GM12878 (cell line): ENCODE measurements at regions of chr2 and their contacts with region 1.

Region 1: GRCh38 chr2:189848276-189848675 is 64.0 kb downstream of the PMS1 start:
- DNase-seq: no peak
- ATAC-seq: no peak
- H3K4me3 ChIP-seq: no peak overlapping the region
- H3K27ac ChIP-seq: no peak overlapping the region
- H3K4me1 ChIP-seq: no peaks in the 10 kb centered on the region
- H3K27me3 ChIP-seq: no peaks in the 10 kb centered on the region
- CTCF ChIP-seq: no peak
- EP300 ChIP-seq: no peak
- POLR2A ChIP-seq: no peak
- RAD21 ChIP-seq: no peak

Region 2: GRCh38 chr2:189858291-189858690 is 10.0 kb after region 1 on chr2:
- CTCF ChIA-PET with region 1: no interaction called
- POLR2A ChIA-PET with region 1: no interaction called
- RAD21 ChIA-PET with region 1: no interaction called
- SMC1A ChIA-PET with region 1: interaction called, 11 read pairs
- in situ Hi-C with region 1: no loop called
- intact Hi-C with region 1: no loop called
- DNase-seq: no peak
- ATAC-seq: no peak
- H3K4me3 ChIP-seq: no peak overlapping the region
- H3K27ac ChIP-seq: no peak overlapping the region
- H3K4me1 ChIP-seq: no peaks in the 10 kb centered on the region
- H3K27me3 ChIP-seq: no peaks in the 10 kb centered on the region
- CTCF ChIP-seq: no peak
- EP300 ChIP-seq: no peak
- POLR2A ChIP-seq: no peak
- RAD21 ChIP-seq: no peak